Heart left ventricle (tissue), 16 donors: ENCODE measurements at regions of chr10 and their contacts with region 1.

Region 1: DNA sequence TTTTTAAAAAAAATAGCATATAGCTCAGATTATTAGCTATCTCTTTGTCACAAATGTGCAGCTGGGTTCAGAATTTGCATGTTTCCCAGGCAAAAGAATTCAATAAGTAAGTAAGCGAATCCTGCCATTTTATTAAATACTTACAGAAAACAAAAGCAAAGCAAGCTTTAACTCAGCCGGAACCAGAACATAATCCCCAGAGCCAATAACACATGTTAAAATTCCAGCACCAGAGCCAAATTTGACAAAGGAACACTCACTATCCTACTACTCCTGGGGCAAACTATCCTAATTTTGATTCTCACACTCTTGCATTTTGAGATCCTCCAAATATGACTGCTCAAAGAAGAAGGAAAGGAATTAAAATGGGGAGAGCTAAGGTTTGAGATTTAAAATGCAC is 32.6 kb downstream of the LRRTM3 start:
- DNase-seq: no peak
- ATAC-seq: peak in 1 of 4 donors; percentile 45
- H3K4me3 ChIP-seq: peak overlapping the region in 7 of 12 donors; percentile 3 to 45 (median 30)
- H3K27ac ChIP-seq: peak overlapping the region in 3 of 12 donors; percentile 3 to 40 (median 7)
- H3K4me1 ChIP-seq: peaks cover 0 to 19% (median 1%) of the 10 kb centered on the region in 12 donors
- H3K27me3 ChIP-seq: no peaks in the 10 kb centered on the region
- CTCF ChIP-seq: no peak
- POLR2A ChIP-seq: no peak

Region 2: DNA sequence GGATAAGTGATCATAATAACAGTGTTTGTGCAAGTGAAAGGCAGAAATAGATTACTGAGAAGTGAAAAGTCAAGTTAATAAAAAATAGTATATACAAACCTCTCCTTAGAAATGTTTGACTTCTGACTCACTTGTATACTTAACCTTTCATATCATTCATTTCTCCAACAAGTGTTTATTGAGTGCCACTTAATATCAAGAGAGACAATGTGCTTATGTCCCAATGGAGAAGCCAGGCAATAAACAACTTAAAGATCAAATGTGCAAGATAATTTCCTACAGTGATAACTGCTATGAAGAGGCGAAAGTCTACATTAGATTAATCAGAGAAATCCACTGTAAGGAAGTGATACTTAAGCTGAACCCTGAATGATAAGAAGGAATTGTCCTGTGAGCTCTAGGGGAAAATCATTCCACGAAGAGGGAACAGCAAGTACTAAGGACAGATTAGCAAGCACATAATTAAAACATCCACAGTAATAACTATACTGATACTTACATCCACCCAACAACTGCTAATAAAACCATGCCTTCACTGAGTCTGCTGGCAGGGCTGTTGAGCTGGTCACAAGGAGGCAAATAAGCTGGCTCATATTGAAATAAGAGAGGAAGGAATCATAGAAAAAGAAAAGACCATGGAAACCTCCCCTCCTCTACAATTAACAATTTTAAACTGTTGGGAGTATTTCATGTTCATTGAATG is 534.0 kb after region 1 on chr10:
- intact Hi-C with region 1: no loop called
- DNase-seq: no peak
- ATAC-seq: no peak
- H3K4me3 ChIP-seq: no peak overlapping the region
- H3K27ac ChIP-seq: no peak overlapping the region
- H3K4me1 ChIP-seq: no peaks in the 10 kb centered on the region
- H3K27me3 ChIP-seq: no peaks in the 10 kb centered on the region
- CTCF ChIP-seq: no peak
- POLR2A ChIP-seq: no peak

Region 3: GRCh38 chr10:67506082-67506756 is 547.8 kb after region 1 on chr10:
- intact Hi-C with region 1: loop called in 2 of 10 experiments (anchors 10 kb)
- DNase-seq: no peak
- ATAC-seq: peak in 2 of 4 donors; percentile 30 to 42
- H3K4me3 ChIP-seq: no peak overlapping the region
- H3K27ac ChIP-seq: no peak overlapping the region
- H3K4me1 ChIP-seq: peaks cover 0 to 10% (median 2%) of the 10 kb centered on the region in 12 donors
- H3K27me3 ChIP-seq: no peaks in the 10 kb centered on the region
- CTCF ChIP-seq: peak in 1 of 12 donors; percentile 16
- POLR2A ChIP-seq: no peak

Region 4: GRCh38 chr10:67520924-67521520 is 562.6 kb after region 1 on chr10:
- intact Hi-C with region 1: loop called in 1 of 10 experiments (anchors 10 kb)
- DNase-seq: peak in 2 of 5 donors; percentile 8 to 31
- ATAC-seq: peak; percentile 58 to 79 (median 74)
- H3K4me3 ChIP-seq: no peak overlapping the region
- H3K27ac ChIP-seq: no peak overlapping the region
- H3K4me1 ChIP-seq: peaks cover 0 to 4% (median 0%) of the 10 kb centered on the region in 12 donors
- H3K27me3 ChIP-seq: no peaks in the 10 kb centered on the region
- CTCF ChIP-seq: peak; percentile 44 to 78 (median 67)
- POLR2A ChIP-seq: no peak

Region 5: DNA sequence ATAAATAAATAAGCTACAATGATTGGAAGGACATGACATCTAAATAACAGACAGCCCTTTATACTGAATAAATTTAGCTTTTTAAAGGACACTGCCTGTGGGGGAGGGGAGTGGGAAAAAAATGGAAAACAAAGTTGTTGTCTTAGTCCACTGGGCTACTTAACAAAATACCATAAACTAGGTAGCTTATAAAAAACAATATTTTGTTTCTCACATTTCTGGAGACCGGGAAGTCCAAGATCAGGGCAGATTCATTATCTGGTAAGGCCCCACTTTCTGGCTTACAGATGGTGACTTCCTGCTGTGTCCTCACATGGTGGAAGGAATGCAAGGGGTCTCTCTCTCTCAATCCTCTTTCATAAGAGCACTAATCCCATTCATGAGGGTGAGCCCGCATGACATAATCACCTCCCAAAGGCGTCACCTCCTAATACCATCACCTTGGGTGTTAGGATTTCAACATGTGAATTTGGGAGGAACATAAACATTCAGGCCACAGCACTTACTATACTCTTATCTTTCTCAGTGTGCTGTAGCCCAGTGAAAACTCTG is 836.5 kb after region 1 on chr10:
- intact Hi-C with region 1: loop called in 1 of 10 experiments (anchors 5 kb)
- DNase-seq: no peak
- ATAC-seq: no peak
- H3K4me3 ChIP-seq: no peak overlapping the region
- H3K27ac ChIP-seq: no peak overlapping the region
- H3K4me1 ChIP-seq: no peaks in the 10 kb centered on the region
- H3K27me3 ChIP-seq: no peaks in the 10 kb centered on the region
- CTCF ChIP-seq: no peak
- POLR2A ChIP-seq: no peak